Common myeloid progenitor, CD34-positive (primary cell): ENCODE measurements at regions of chr12 and their contacts with region 1.

Region 1: GRCh38 chr12:12334367-12335040 is 15.5 kb downstream of the MANSC1 start:
- DNase-seq: peak; percentile 66 to 80 (median 80)
- H3K4me3 ChIP-seq: no peak overlapping the region
- H3K27ac ChIP-seq: no peak overlapping the region
- H3K4me1 ChIP-seq: peaks cover 12 to 36% (median 23%) of the 10 kb centered on the region in 4 experiments
- H3K27me3 ChIP-seq: no peaks in the 10 kb centered on the region

Region 2: DNA sequence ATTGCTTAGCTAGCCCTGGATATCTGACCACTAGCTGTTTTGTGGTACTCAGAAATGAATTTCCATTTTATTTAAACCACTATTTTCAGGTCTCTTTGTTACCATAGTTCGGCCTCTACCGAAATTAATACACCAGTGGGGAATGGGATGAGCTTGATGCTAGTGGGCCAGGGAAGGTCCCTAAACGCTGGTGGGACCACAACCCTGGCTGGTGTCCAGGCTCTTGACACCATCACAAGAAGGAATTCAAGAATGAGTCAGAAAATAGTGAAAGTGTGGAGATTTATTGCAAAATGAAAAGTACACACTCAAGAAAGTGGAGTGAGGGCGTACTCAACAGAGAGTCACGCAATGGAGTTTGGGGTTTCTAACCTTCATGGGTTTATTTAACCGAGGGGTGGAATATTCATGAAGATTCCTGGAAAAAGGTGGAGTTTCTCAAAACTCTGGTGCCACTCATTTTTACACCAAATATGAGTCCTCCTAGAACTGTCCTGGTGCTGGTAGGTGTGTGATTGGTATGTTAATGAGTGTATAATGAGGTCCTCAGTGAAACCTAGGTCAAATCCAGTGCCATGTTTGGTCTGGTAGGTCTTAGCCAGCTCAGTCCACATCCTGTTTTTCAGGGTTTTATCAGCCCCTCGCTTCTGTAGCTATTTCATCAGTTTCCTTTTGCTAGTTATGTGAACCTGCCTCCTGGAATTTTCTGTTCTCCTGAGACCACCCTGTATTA is 28.8 kb before region 1 on chr12:
- CTCF ChIA-PET with region 1: no interaction called
- POLR2A ChIA-PET with region 1: no interaction called
- DNase-seq: no peak
- H3K4me3 ChIP-seq: no peak overlapping the region
- H3K27ac ChIP-seq: no peak overlapping the region
- H3K4me1 ChIP-seq: no peaks in the 10 kb centered on the region
- H3K27me3 ChIP-seq: no peaks in the 10 kb centered on the region

Region 3: GRCh38 chr12:12349711-12350665 is 15.5 kb after region 1 on chr12 and contains the start of gene MANSC1:
- CTCF ChIA-PET with region 1: interaction called, 13 read pairs
- POLR2A ChIA-PET with region 1: no interaction called
- DNase-seq: peak; percentile 62 to 83 (median 77)
- H3K4me3 ChIP-seq: peak within 1 kb of the TSS; percentile 60 to 89 (median 70)
- H3K27ac ChIP-seq: no peak within 1 kb of the TSS
- H3K4me1 ChIP-seq: peaks cover 2 to 22% (median 12%) of the 10 kb centered on the region in 4 experiments
- H3K27me3 ChIP-seq: no peaks in the 10 kb centered on the region

Region 4: GRCh38 chr12:12356886-12357718 is 22.6 kb after region 1 on chr12 and contains the start of gene BORCS5:
- CTCF ChIA-PET with region 1: interaction called, 20 read pairs
- POLR2A ChIA-PET with region 1: interaction called, 4 read pairs
- DNase-seq: peak; percentile 97 to 98 (median 98)
- H3K4me3 ChIP-seq: peak within 1 kb of the TSS; percentile 74 to 93 (median 88)
- H3K27ac ChIP-seq: peak within 1 kb of the TSS; percentile 67 to 90
- H3K4me1 ChIP-seq: peaks cover 12 to 21% (median 16%) of the 10 kb centered on the region in 4 experiments
- H3K27me3 ChIP-seq: no peaks in the 10 kb centered on the region